ENCODE measurements at regions of chr10 and their contacts with region 1.

Region 1: DNA sequence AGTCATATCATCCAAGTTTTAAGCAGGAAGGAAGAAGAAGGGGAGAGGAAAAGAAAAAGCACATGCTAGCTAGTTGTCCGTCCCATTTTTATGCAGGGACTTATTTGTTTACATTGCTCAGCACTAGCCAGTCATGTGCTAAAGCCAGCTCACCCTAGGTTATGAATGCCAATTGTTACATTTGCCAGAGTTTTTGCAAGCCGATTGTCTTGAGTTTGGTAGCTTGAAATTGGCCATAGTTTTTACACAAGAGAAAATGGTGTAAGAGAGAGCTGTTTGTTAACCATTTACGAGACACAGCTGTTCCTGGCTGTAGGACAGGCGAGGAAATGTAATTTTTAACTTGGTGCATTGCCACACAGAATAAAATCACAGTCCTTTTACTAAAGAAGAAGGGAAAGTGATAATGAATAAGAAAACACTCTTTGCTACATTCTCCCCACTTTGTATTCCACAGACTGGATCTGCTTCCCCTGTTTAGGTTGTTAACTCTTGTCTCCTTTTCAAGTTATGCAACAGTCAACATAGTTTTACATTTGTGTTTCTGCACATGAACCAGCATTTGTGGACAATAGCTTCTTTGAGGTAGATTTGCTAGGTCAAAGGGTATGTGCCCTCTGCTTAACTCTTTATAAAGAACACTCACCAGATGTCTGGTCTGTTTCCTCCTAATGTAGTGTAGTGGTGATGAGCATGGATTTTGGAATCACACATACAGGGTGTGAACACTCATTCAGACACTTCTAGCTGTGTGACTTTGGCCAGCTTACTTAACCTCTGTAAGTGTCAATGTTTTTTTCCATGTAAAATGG is 357.2 kb downstream of the LRMDA start:
- DNase-seq: peak; percentile 80
- ATAC-seq: peak; percentile 84
- H3K4me3 ChIP-seq: no peak overlapping the region
- H3K27ac ChIP-seq: no peak overlapping the region
- H3K4me1 ChIP-seq: peaks cover 12% of the 10 kb centered on the region
- H3K27me3 ChIP-seq: peaks cover 31% of the 10 kb centered on the region
- CTCF ChIP-seq: no peak

Region 2: GRCh38 chr10:75646218-75646915 is 142.2 kb before region 1 on chr10:
- CTCF ChIA-PET with region 1: interaction called, 17 read pairs
- POLR2A ChIA-PET with region 1: no interaction called
- intact Hi-C with region 1: no loop called
- DNase-seq: no peak
- ATAC-seq: no peak
- H3K4me3 ChIP-seq: no peak overlapping the region
- H3K27ac ChIP-seq: no peak overlapping the region
- H3K4me1 ChIP-seq: peaks cover 6% of the 10 kb centered on the region
- H3K27me3 ChIP-seq: peaks cover 32% of the 10 kb centered on the region
- CTCF ChIP-seq: no peak

Region 3: DNA sequence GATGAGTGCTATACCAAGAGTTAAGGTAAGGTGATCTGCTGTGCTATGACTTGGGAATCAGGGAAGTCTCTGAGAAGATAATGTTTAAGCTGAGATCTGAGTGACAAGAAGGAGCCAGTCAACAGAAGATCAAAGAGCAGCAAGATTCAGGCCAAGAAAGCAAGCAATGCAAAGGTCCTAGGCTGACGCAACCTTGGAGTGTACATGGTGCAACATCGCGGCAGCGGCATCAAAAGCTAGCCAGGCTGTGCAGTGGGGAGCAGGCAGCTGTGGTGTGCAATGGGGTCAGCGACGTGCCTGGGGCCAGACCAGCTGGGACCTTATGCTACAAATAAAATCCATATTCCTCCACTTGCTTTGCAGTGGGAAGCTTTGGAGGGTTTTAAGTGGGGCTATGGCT is 33.1 kb before region 1 on chr10:
- CTCF ChIA-PET with region 1: no interaction called
- POLR2A ChIA-PET with region 1: no interaction called
- intact Hi-C with region 1: no loop called
- DNase-seq: no peak
- ATAC-seq: no peak
- H3K4me3 ChIP-seq: no peak overlapping the region
- H3K27ac ChIP-seq: no peak overlapping the region
- H3K4me1 ChIP-seq: no peaks in the 10 kb centered on the region
- H3K27me3 ChIP-seq: peaks cover 58% of the 10 kb centered on the region
- CTCF ChIP-seq: no peak

Region 4: GRCh38 chr10:75772153-75772887 is 16.3 kb before region 1 on chr10:
- CTCF ChIA-PET with region 1: no interaction called
- POLR2A ChIA-PET with region 1: no interaction called
- intact Hi-C with region 1: loop called (anchors 1 kb)
- DNase-seq: peak; percentile 68
- ATAC-seq: no peak
- H3K4me3 ChIP-seq: peak overlapping the region; percentile 52
- H3K27ac ChIP-seq: peak overlapping the region; percentile 76
- H3K4me1 ChIP-seq: peaks cover 48% of the 10 kb centered on the region
- H3K27me3 ChIP-seq: peaks cover 17% of the 10 kb centered on the region; the same call in 1 of the 2 replicates
- CTCF ChIP-seq: no peak

Measured in PC-3 (cell line).